ENCODE measurements at regions of chr4 and their contacts with region 1.

Region 1: GRCh38 chr4:155442267-155443105 is 65.7 kb upstream of the MAP9 start:
- DNase-seq: peak; percentile 81
- H3K4me3 Mint-ChIP-seq: peak overlapping the region; percentile 54
- H3K27ac Mint-ChIP-seq: peak overlapping the region; percentile 75
- H3K4me1 Mint-ChIP-seq: peaks cover 30% of the 10 kb centered on the region
- H3K27me3 Mint-ChIP-seq: no peaks in the 10 kb centered on the region
- CTCF ChIP-seq: peak; percentile 68

Region 2: GRCh38 chr4:155675709-155676429 is 233.4 kb after region 1 on chr4:
- CTCF ChIA-PET with region 1: no interaction called
- intact Hi-C with region 1: loop called (anchors 5 kb)
- DNase-seq: no peak
- H3K4me3 Mint-ChIP-seq: peak overlapping the region; percentile 27
- H3K27ac Mint-ChIP-seq: peak overlapping the region; percentile 13
- H3K4me1 Mint-ChIP-seq: peaks cover 47% of the 10 kb centered on the region
- H3K27me3 Mint-ChIP-seq: no peaks in the 10 kb centered on the region
- CTCF ChIP-seq: no peak

Region 3: DNA sequence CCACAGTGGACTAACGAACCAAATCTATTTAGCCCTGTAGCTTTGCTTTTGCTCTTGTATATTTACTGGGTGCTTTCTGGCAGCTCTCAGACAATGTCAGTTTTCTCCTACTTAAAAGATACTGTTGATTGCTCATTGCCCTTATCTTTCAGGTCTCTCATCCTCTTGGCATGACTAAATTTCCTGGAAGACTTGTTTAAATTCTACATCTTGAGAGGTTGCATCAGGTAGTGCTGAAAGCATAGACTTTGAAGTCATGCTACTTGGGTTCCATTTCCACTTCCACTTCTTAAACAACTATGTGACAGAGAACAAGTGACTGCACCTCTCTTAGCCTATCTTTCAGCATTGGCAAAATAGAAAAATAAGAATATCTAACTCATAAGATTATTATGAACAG is 469.4 kb after region 1 on chr4:
- CTCF ChIA-PET with region 1: no interaction called
- intact Hi-C with region 1: no loop called
- DNase-seq: no peak
- H3K4me3 Mint-ChIP-seq: no peak overlapping the region
- H3K27ac Mint-ChIP-seq: no peak overlapping the region
- H3K4me1 Mint-ChIP-seq: peaks cover 8% of the 10 kb centered on the region
- H3K27me3 Mint-ChIP-seq: no peaks in the 10 kb centered on the region
- CTCF ChIP-seq: no peak